CD14-positive monocyte (primary cell): ENCODE measurements at regions of chr7 and their contacts with region 1.

Region 1: GRCh38 chr7:23181684-23182553 is at the start of gene NUP42:
- DNase-seq: peak; percentile 98 to 99 (median 98)
- H3K4me3 ChIP-seq: peak within 1 kb of the TSS; percentile 74 to 88 (median 79)
- H3K4me3 Mint-ChIP-seq: peak within 1 kb of the TSS; percentile 91 to 100
- H3K27ac ChIP-seq: peak within 1 kb of the TSS; percentile 94 to 97
- H3K27ac Mint-ChIP-seq: peak within 1 kb of the TSS; percentile 97 to 100 (median 99)
- H3K4me1 ChIP-seq: peaks cover 21 to 35% of the 10 kb centered on the region in 2 donors
- H3K4me1 Mint-ChIP-seq: peaks cover 28% of the 10 kb centered on the region
- H3K27me3 ChIP-seq: peaks cover 3 to 14% of the 10 kb centered on the region in 2 donors
- H3K27me3 Mint-ChIP-seq: peaks cover 0 to 13% (median 2%) of the 10 kb centered on the region in 3 donors
- CTCF ChIP-seq: no peak
- polyA plus RNA-seq, gene NUP42: 26.3 to 54.6 (median 28.5) TPM

Region 2: DNA sequence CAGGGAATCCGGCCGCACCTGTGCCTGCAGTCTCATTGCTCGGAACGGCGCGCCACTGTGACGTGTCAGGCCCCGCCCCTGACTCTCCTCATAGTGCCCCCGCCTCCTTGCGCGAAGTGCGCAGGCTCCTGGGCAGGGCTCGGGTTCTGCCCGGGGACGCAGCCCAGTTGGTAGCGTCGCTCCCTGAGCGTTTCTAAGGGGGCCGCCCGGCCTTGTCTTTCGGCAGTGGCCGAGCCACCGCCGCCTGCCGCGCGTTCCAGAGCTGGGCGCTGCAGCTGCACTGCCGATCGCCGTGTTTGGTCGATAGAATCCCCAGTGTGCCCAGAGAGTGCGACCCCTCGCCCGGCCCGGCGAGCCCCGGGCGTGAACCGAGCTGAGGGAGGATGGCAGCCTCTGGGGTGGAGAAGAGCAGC is 76.3 kb before region 1 on chr7 and contains the start of gene KLHL7:
- intact Hi-C with region 1: loop called (anchors 2 to 5 kb)
- DNase-seq: peak; percentile 89 to 91 (median 89)
- H3K4me3 ChIP-seq: peak within 1 kb of the TSS; percentile 76 to 97 (median 92)
- H3K4me3 Mint-ChIP-seq: peak within 1 kb of the TSS; percentile 95 to 98
- H3K27ac ChIP-seq: peak within 1 kb of the TSS; percentile 72 to 88
- H3K27ac Mint-ChIP-seq: peak within 1 kb of the TSS; percentile 87 to 96 (median 92)
- H3K4me1 ChIP-seq: peaks cover 16 to 17% of the 10 kb centered on the region in 2 donors
- H3K4me1 Mint-ChIP-seq: peaks cover 40% of the 10 kb centered on the region
- H3K27me3 ChIP-seq: no peaks in the 10 kb centered on the region
- H3K27me3 Mint-ChIP-seq: peaks cover 0 to 2% (median 2%) of the 10 kb centered on the region in 3 donors
- CTCF ChIP-seq: no peak
- polyA plus RNA-seq, gene KLHL7: 15.5 to 21.0 (median 17.4) TPM

Region 3: DNA sequence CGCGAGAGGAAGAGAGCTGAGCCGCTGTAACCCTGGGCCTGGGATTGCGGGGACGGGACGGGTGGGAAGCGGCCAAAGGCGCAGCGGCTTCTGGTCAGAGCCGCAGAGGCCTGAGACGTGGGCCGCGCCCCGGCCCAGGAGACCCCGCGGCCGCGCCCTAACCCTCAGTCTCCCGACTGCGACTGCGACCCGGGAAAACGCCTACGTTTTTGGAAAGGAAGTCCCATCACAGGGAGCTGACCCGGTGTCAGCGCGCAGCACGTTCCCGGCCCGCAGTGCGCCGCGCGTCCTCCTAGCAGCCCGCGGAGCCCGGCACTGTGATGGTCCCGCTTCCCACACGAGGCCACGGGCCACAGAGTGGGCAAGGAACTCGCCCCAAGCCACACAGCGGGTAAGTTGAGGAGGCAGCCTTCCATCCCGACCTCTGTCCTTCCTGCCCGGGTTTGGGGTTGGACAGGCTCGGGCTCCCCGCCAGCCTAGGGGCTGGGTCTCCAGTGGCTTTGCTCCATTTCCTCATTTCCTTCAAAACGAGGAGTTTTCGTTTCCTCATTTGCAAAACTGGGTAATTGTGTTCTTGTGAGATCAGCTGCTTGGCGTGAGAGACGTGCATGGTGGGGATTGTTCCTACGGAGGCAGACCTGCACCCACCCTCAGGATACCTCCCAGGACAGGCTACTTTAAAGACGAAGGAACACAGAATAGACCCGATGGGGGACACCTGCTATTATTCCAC is 65.8 kb after region 1 on chr7:
- intact Hi-C with region 1: loop called in 1 of 2 experiments (anchors 10 kb)
- DNase-seq: peak; percentile 77 to 87 (median 84)
- H3K4me3 ChIP-seq: peak overlapping the region; percentile 29 to 87 (median 57)
- H3K4me3 Mint-ChIP-seq: peak overlapping the region; percentile 82 to 89
- H3K27ac ChIP-seq: peak overlapping the region; percentile 68 to 95
- H3K27ac Mint-ChIP-seq: peak overlapping the region; percentile 82 to 95 (median 90)
- H3K4me1 ChIP-seq: peaks cover 24 to 28% of the 10 kb centered on the region in 2 donors
- H3K4me1 Mint-ChIP-seq: peaks cover 27% of the 10 kb centered on the region
- H3K27me3 ChIP-seq: no peaks in the 10 kb centered on the region
- H3K27me3 Mint-ChIP-seq: peaks cover 2 to 11% (median 8%) of the 10 kb centered on the region in 3 donors
- CTCF ChIP-seq: no peak

Region 4: GRCh38 chr7:23261843-23262452 is 80.0 kb after region 1 on chr7:
- intact Hi-C with region 1: loop called in 1 of 2 experiments (anchors 5 kb)
- DNase-seq: peak; percentile 62 to 74 (median 72)
- H3K4me3 ChIP-seq: no peak overlapping the region
- H3K4me3 Mint-ChIP-seq: no peak overlapping the region
- H3K27ac ChIP-seq: no peak overlapping the region
- H3K27ac Mint-ChIP-seq: no peak overlapping the region
- H3K4me1 ChIP-seq: no peaks in the 10 kb centered on the region
- H3K4me1 Mint-ChIP-seq: no peaks in the 10 kb centered on the region
- H3K27me3 ChIP-seq: peaks cover 0 to 2% of the 10 kb centered on the region in 2 donors
- H3K27me3 Mint-ChIP-seq: peaks cover 3 to 8% (median 3%) of the 10 kb centered on the region in 3 donors
- CTCF ChIP-seq: peak; percentile 92

Region 5: GRCh38 chr7:23474094-23474828 is 292.3 kb after region 1 on chr7:
- intact Hi-C with region 1: loop called in 1 of 2 experiments (anchors 5 kb)
- DNase-seq: peak; percentile 86 to 89 (median 87)
- H3K4me3 ChIP-seq: peak overlapping the region; percentile 30 to 73 (median 35)
- H3K4me3 Mint-ChIP-seq: peak overlapping the region; percentile 78 to 90
- H3K27ac ChIP-seq: no peak overlapping the region
- H3K27ac Mint-ChIP-seq: peak overlapping the region in 3 of 7 donors; percentile 34 to 82 (median 68)
- H3K4me1 ChIP-seq: peaks cover 36 to 46% of the 10 kb centered on the region in 2 donors
- H3K4me1 Mint-ChIP-seq: peaks cover 35% of the 10 kb centered on the region
- H3K27me3 ChIP-seq: peaks cover 75 to 93% of the 10 kb centered on the region in 2 donors
- H3K27me3 Mint-ChIP-seq: peaks cover 74 to 84% (median 75%) of the 10 kb centered on the region in 3 donors
- CTCF ChIP-seq: no peak

Region 6: GRCh38 chr7:23531794-23532489 is 350.0 kb after region 1 on chr7 and contains the start of gene TRA2A:
- intact Hi-C with region 1: loop called in 1 of 2 experiments (anchors 5 kb)
- DNase-seq: peak; percentile 93 to 95 (median 94)
- H3K4me3 ChIP-seq: peak within 1 kb of the TSS; percentile 77 to 97 (median 84)
- H3K4me3 Mint-ChIP-seq: peak within 1 kb of the TSS; percentile 98 to 99
- H3K27ac ChIP-seq: peak within 1 kb of the TSS; percentile 96 to 99
- H3K27ac Mint-ChIP-seq: peak within 1 kb of the TSS; percentile 100
- H3K4me1 ChIP-seq: peaks cover 11 to 34% of the 10 kb centered on the region in 2 donors
- H3K4me1 Mint-ChIP-seq: peaks cover 39% of the 10 kb centered on the region
- H3K27me3 ChIP-seq: no peaks in the 10 kb centered on the region
- H3K27me3 Mint-ChIP-seq: peaks cover 0 to 2% (median 2%) of the 10 kb centered on the region in 3 donors
- CTCF ChIP-seq: no peak
- polyA plus RNA-seq, gene TRA2A: 31.2 to 92.8 (median 46.6) TPM